PC-9 (cell line): ENCODE measurements at regions of chr13 and their contacts with region 1.

Region 1: DNA sequence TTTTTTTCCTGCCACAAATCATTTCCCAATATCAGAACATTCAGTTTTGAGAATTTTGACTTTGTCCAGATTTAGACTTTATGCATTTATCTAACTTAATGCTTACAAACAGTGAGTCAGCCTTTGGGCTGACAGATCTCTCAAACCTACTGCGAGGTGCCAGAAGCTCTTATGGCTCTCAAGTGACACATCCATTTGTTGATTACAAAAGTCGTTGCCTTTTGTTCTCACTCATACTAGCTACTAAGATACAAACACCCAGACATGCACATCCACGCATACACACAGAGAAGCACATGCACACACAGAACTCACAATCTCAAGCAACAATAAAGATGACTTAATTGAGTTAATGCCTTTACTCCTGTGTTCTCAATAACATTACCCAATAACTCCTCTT is 1147.5 kb downstream of the DIAPH3 start:
- DNase-seq: no peak
- H3K4me3 ChIP-seq: no peak overlapping the region
- H3K27ac ChIP-seq: no peak overlapping the region
- H3K4me1 ChIP-seq: no peaks in the 10 kb centered on the region
- H3K27me3 ChIP-seq: no peaks in the 10 kb centered on the region
- CTCF ChIP-seq: no peak

Region 2: GRCh38 chr13:58495668-58496067 is 520.6 kb before region 1 on chr13:
- CTCF ChIA-PET with region 1: no interaction called
- POLR2A ChIA-PET with region 1: no interaction called
- intact Hi-C with region 1: loop called (anchors 5 kb)
- DNase-seq: no peak
- H3K4me3 ChIP-seq: no peak overlapping the region
- H3K27ac ChIP-seq: no peak overlapping the region
- H3K4me1 ChIP-seq: no peaks in the 10 kb centered on the region
- H3K27me3 ChIP-seq: no peaks in the 10 kb centered on the region
- CTCF ChIP-seq: no peak